Posterior vena cava (tissue), 2 donors: ENCODE measurements at regions of chr4 and their contacts with region 1.

Region 1: GRCh38 chr4:184538023-184538599 is 63.8 kb upstream of the IRF2 start:
- DNase-seq: peak; percentile 96

Region 2: DNA sequence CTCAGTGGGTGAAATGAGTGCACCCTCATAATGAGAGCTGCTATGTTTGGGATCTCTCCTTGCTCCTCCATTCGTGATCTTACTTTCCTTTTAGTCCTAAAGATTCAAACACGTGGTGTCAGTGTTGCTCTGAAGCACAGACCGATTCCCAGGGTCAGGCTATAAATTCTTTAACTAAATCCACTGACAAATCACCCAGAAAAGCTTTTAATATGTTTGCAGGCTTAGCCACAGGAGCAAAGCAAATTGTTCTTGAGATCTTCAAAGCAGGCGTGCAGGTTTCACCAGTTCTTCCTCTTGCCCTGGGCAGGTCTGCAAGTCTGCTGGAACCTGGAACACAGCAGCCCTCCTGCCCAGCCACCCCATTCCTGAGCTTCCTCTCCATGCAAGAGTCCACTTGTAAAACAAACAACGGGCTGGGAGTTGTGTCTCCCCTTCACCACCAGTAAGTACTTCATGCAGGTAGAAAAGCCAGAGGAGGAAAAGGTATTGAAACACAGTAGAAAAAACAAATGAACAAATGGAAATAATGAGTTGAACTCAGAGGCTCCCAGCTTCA is 250.3 kb before region 1 on chr4:
- intact Hi-C with region 1: loop called (anchors 5 to 10 kb)
- DNase-seq: no peak

Region 3: GRCh38 chr4:184400375-184400870 is 137.7 kb before region 1 on chr4:
- intact Hi-C with region 1: loop called in 1 of 2 experiments (anchors 10 kb)
- DNase-seq: no peak

Region 4: DNA sequence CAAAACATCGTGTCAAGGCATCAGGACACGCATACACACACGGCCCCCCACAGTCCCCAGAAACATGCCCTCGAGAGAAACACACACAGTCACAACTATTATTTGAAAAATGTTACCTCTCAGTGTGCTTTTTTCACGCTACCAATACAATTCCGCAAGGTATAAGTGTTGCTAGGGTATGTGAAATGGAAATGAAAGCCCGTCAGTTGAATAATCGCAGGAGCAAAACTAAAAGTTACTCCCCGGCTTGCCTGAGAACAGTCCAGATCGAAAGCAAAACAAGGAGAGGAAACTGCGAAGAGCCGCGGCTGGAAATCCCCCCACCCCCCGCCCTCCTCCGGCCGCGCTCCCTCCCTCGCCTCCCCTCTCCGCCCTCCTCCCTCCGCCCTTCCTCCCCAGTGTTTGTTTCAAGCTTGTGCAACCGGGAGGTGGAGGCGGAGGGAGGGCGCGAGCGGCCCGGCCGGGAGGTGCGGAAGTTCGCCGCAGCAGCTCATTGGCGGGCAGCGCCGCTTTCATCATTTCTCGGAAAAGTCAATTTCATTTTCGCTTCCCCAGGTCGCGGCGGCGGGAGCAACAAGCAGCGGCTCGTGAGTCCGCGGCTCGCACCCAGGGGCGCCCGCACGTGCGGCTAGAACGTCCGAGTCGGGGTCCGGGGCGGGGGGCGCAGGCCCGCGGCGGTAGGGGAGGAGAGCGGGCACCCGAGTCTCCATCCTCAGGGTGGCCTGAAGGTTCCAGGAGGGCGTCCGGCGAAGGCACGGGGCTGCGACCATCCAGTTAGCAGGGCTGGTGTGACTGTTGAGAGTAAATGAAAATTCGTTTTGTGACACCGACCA is 63.6 kb before region 1 on chr4 and contains the start of gene IRF2:
- intact Hi-C with region 1: loop called (anchors 2 to 10 kb)
- DNase-seq: peak; percentile 99
- total RNA-seq, gene IRF2: 25.1 to 29.4 TPM

Region 5: GRCh38 chr4:184568770-184569169 is 30.7 kb after region 1 on chr4:
- intact Hi-C with region 1: no loop called
- DNase-seq: no peak